ENCODE measurements at regions of chr1 and their contacts with region 1.

Region 1: GRCh38 chr1:19390901-19391595 is 78.9 kb downstream of the SLC66A1 start:
- H3K4me3 Mint-ChIP-seq: peak overlapping the region; percentile 60
- H3K27ac Mint-ChIP-seq: peak overlapping the region; percentile 88
- H3K4me1 Mint-ChIP-seq: peaks cover 63% of the 10 kb centered on the region
- H3K27me3 Mint-ChIP-seq: no peaks in the 10 kb centered on the region

Region 2: GRCh38 chr1:19477284-19478249 is 86.5 kb after region 1 on chr1:
- intact Hi-C with region 1: loop called (anchors 5 kb)
- H3K4me3 Mint-ChIP-seq: peak overlapping the region; percentile 63
- H3K27ac Mint-ChIP-seq: peak overlapping the region; percentile 55
- H3K4me1 Mint-ChIP-seq: peaks cover 91% of the 10 kb centered on the region
- H3K27me3 Mint-ChIP-seq: no peaks in the 10 kb centered on the region

Region 3: GRCh38 chr1:19582302-19582701 is 191.3 kb after region 1 on chr1:
- intact Hi-C with region 1: loop called (anchors 2 kb)
- H3K4me3 Mint-ChIP-seq: no peak overlapping the region
- H3K27ac Mint-ChIP-seq: no peak overlapping the region
- H3K4me1 Mint-ChIP-seq: peaks cover 34% of the 10 kb centered on the region
- H3K27me3 Mint-ChIP-seq: peaks cover 4% of the 10 kb centered on the region

Region 4: DNA sequence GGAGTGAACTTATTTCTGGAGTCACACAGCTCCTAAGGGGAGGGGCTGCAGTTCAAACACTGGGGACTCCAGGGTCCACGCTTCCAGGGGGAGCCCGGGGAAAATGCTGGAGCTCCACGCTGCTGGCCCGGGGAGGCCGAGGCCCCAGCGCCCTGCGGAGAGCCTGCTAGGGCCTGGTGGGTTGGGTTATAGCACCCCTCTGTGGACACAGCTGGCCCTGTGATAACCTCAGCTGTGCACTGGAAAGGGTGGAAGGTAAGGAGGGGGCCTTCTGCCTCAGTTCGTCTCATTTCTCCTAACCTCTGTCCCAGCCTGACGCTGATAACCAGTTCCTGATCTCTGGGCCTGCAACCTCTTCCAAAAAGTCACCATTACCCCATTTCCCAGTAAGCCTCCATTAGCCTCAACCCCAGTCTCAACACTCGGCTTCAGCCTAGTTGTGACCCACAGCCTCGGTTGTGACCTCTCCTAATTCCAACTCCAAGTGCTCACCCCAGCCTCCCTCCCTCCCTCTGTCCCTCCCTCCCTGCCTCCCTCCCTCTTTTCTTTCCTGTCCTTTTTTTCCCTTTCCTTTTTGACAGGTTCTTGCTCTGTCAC is 260.2 kb after region 1 on chr1:
- intact Hi-C with region 1: loop called (anchors 2 kb)
- H3K4me3 Mint-ChIP-seq: no peak overlapping the region
- H3K27ac Mint-ChIP-seq: no peak overlapping the region
- H3K4me1 Mint-ChIP-seq: peaks cover 18% of the 10 kb centered on the region
- H3K27me3 Mint-ChIP-seq: peaks cover 50% of the 10 kb centered on the region

Region 5: DNA sequence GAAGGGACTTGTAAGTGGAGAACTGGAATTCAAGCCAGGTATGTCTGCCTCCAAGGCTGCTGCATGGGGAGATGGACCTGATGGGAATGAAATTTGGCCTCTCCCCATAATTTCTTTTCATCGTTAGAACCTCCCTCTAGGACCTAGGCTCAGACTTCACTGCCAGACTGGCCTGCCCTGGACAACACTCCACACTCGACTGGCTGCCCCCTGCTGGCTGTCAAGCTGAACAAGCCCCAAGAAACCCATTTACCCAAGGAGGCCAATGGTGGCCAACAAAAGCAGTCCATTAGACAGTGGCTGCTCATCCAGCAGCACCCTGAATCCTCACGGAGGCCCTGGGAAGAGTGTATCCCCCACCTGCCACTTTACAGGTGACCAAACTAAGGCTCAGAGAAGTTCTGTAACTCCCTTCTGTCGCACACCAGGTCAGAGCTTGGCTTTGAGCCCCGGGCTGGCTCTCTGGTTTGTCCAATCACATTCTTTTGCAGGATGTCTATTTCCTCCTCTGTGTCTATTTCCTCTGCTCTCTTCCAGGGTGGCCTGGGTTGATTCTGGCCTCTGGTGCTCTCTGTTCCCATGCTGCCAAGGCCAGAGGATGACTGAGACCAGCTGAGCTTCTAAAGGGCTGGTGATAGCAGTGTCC is 420.3 kb after region 1 on chr1:
- intact Hi-C with region 1: no loop called
- H3K4me3 Mint-ChIP-seq: no peak overlapping the region
- H3K27ac Mint-ChIP-seq: no peak overlapping the region
- H3K4me1 Mint-ChIP-seq: no peaks in the 10 kb centered on the region
- H3K27me3 Mint-ChIP-seq: peaks cover 11% of the 10 kb centered on the region

Measured in dendritic cell treated with granulocyte-macrophage colony-stimulating factor and Interleukin-4, amounts not matched to agents 40 ng/mL and 50 ng/mL, for 4 days (primary cell).